ENCODE measurements at regions of chr4 and their contacts with region 1.

Region 1: DNA sequence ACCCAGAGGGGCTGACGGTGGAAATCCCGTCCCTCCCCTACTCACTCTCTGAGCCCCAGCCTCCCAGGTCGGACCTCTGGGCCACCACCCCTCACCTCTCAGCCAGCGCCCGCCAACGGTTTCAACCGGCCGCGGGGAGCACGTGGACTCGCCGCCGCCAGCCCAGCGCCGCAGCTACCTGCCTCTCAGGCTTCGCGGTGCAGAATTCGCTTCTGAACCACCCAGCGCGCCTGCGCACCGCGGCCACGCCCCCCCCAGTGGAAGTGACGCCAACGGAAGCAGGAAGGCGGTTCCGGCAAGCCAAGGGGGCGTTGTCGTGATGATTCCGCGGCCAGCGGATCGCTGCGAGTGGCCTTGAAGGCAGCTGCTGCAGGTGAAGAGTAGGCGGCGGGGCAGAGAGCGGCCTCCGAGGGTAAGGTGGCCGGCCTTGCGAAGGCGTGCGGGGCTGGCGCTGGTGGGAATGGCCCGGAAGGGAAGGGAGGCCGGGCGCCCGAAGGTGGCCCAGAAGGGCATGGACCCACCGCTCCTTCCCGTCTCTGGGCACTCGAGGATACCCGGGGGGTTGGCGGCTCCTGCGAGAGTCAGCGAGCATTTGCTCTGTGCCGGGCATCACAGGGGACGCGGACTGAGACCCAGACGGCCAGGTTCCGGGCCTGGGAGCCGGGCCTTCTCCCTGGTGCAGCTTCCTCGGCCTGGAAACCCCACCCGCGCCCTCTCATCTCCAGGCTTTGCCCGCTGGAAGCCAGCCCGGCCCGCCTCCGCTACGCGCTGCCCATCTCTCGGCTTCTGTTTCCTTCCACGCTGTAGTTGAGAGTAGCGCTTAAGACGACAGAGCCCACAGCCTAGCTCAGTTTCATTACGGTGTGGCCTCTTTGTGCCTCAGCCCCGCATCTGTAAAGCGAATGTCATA is at the starts of genes LYAR and ZBTB49:
- DNase-seq: peak; percentile 25
- ATAC-seq: peak; percentile 98
- H3K4me3 ChIP-seq: peak within 1 kb of the TSS; percentile 92 to 93
- H3K27ac ChIP-seq: peak within 1 kb of the TSS; percentile 86
- H3K4me1 ChIP-seq: peaks cover 14% of the 10 kb centered on the region
- H3K27me3 ChIP-seq: no peaks in the 10 kb centered on the region
- CTCF ChIP-seq: no peak
- total RNA-seq, gene LYAR: 24.3 TPM
- total RNA-seq, gene ZBTB49: 4.2 TPM

Region 2: DNA sequence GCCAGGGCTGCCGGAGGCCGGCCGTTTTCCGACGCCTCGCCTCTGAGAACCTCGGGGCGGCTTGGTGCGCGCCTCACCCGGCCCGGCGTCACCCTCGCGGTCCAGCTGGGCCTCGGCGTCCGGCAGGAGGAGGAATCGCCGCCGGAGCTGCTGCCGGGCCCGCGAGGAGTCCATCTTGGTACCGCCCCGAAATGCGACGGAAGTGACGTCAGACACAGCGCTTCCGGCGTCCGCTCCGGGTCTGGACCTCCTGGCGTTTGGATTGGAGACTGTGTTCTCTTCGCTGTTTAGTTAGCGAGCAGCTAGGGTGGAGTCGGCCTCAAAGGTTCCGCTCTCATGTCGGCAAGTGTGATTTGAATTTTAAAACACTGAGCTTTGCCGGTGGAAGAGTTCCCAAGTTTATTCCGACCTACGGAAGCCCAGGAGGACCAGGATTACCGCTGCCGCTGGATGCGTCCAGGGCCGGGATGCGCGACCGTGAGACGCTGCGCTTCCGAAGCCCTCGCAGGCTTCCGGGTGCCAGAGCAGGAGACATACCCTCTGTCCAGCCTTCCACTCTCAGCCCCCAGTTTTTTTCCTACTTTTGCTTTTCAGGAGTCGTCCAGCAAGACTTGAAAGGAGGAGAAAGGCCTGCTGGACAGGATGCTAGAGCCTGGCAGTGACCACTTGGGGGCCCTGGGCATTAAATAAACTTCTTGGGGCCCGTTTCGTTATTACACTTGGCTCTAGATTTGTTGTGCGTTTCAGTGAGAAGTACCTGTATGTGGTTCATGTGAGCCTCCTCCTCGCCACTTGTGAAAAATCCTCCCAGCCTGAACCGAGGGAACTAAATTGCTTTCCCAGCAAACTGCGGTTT is 41.9 kb before region 1 on chr4 and contains the start of gene TMEM128:
- CTCF ChIA-PET with region 1: no interaction called
- POLR2A ChIA-PET with region 1: no interaction called
- in situ Hi-C with region 1: no loop called
- intact Hi-C with region 1: no loop called
- DNase-seq: peak; percentile 63
- ATAC-seq: peak; percentile 99
- H3K4me3 ChIP-seq: peak within 1 kb of the TSS; percentile 76 to 98
- H3K27ac ChIP-seq: peak within 1 kb of the TSS; percentile 93
- H3K4me1 ChIP-seq: peaks cover 10% of the 10 kb centered on the region
- H3K27me3 ChIP-seq: no peaks in the 10 kb centered on the region
- CTCF ChIP-seq: no peak; the same call in 1 of the 2 replicates
- total RNA-seq, gene TMEM128: 12.9 TPM

Region 3: GRCh38 chr4:4311193-4311592 is 21.0 kb after region 1 on chr4:
- CTCF ChIA-PET with region 1: no interaction called
- POLR2A ChIA-PET with region 1: no interaction called
- in situ Hi-C with region 1: no loop called
- intact Hi-C with region 1: no loop called
- DNase-seq: no peak
- ATAC-seq: no peak
- H3K4me3 ChIP-seq: no peak overlapping the region
- H3K27ac ChIP-seq: no peak overlapping the region
- H3K4me1 ChIP-seq: no peaks in the 10 kb centered on the region
- H3K27me3 ChIP-seq: no peaks in the 10 kb centered on the region
- CTCF ChIP-seq: no peak

Region 4: GRCh38 chr4:4805887-4806286 is 515.7 kb after region 1 on chr4:
- CTCF ChIA-PET with region 1: no interaction called
- POLR2A ChIA-PET with region 1: no interaction called
- in situ Hi-C with region 1: no loop called
- intact Hi-C with region 1: no loop called
- DNase-seq: no peak
- ATAC-seq: no peak
- H3K4me3 ChIP-seq: no peak overlapping the region
- H3K27ac ChIP-seq: no peak overlapping the region
- H3K4me1 ChIP-seq: no peaks in the 10 kb centered on the region
- H3K27me3 ChIP-seq: no peaks in the 10 kb centered on the region
- CTCF ChIP-seq: no peak

Region 5: GRCh38 chr4:5500165-5500564 is 1210.0 kb after region 1 on chr4:
- CTCF ChIA-PET with region 1: no interaction called
- POLR2A ChIA-PET with region 1: no interaction called
- in situ Hi-C with region 1: no loop called
- intact Hi-C with region 1: no loop called
- DNase-seq: no peak
- ATAC-seq: no peak
- H3K4me3 ChIP-seq: no peak overlapping the region
- H3K27ac ChIP-seq: no peak overlapping the region
- H3K4me1 ChIP-seq: no peaks in the 10 kb centered on the region
- H3K27me3 ChIP-seq: no peaks in the 10 kb centered on the region
- CTCF ChIP-seq: no peak

Region 6: GRCh38 chr4:6206771-6207290 is 1916.6 kb after region 1 on chr4:
- CTCF ChIA-PET with region 1: no interaction called
- POLR2A ChIA-PET with region 1: interaction called, 12 read pairs
- in situ Hi-C with region 1: no loop called
- intact Hi-C with region 1: no loop called
- DNase-seq: no peak
- ATAC-seq: no peak
- H3K4me3 ChIP-seq: no peak overlapping the region
- H3K27ac ChIP-seq: no peak overlapping the region
- H3K4me1 ChIP-seq: no peaks in the 10 kb centered on the region
- H3K27me3 ChIP-seq: no peaks in the 10 kb centered on the region
- CTCF ChIP-seq: no peak